CD14-positive monocyte (primary cell): ENCODE measurements at regions of chr4 and their contacts with region 1.

Region 1: DNA sequence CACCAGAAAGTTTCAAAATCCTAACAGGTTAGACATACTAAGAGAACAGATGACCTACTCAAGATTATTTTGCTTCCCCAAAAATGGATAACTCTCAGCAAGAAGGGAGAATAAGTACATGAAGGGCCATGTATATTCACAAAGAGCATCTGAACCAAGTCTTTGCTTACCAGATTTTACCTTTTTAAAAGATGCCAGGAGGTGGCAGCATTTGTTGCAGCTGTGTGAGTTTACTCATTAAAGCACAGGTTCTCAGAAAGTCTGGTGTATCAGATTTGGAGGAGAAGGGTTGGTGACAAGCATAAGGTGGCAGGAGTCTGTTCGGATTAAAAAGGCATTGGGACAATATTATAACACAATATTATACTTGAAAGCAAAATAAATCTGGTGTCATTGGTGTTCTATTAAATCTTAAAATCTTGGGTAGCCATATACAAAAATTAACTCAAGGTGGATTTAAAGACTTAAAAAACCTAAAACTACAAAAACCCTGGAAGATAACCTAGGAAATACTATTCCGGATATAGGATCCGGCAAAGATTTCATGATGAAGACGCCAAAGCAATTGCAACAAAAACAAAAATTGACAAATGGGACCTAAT is 51.3 kb upstream of the NFKB1 start:
- DNase-seq: peak; percentile 30 to 50 (median 49)
- H3K4me3 ChIP-seq: no peak overlapping the region
- H3K4me3 Mint-ChIP-seq: no peak overlapping the region
- H3K27ac ChIP-seq: no peak overlapping the region
- H3K27ac Mint-ChIP-seq: no peak overlapping the region
- H3K4me1 ChIP-seq: peaks cover 7 to 13% of the 10 kb centered on the region in 2 donors
- H3K4me1 Mint-ChIP-seq: peaks cover 8% of the 10 kb centered on the region
- H3K27me3 ChIP-seq: no peaks in the 10 kb centered on the region
- H3K27me3 Mint-ChIP-seq: peaks cover 0 to 2% (median 0%) of the 10 kb centered on the region in 3 donors
- CTCF ChIP-seq: peak; percentile 70

Region 2: DNA sequence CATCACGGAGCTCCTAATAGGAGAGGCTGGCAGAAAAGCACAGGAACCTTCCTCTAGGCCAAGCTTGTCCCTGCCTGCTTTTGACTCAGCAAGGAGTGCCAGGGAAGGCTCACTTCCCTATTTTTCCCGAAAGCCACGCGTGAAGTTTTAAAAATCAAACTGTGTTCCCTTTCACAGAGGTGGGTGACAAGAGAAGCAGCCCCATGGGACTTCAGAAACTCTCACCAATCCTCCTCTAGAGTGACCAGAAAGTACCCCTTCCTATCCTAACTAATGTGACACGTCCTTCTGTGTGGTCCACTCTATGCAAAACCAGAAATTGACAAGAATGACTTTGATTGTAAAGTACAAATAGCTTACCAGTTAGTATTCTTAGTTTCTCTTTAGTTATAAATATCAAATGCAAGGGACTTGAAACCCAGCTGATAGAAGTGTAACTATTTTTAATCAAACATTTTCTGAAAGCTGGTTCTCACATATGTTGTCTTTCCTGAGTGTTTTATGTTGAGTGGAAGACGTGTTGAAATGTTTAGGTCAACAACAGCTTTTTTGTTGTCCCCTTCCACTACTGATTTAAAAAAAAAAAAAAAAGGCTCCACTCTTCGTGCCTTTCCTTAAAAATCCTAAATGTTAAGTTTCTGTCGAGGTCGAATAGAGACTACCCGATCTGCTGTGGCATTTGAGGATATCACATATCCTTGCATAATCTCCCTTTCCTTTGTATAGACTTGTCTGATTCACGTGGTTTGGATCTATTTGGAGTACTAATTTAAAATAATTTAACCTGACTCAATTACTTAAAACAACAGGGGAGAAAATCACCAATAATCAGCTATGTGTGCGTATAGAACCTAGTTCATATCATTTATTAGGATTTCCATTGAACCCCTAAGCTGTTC is 93.4 kb after region 1 on chr4:
- intact Hi-C with region 1: loop called in 1 of 2 experiments (anchors 10 kb)
- DNase-seq: no peak
- H3K4me3 ChIP-seq: no peak overlapping the region
- H3K4me3 Mint-ChIP-seq: no peak overlapping the region
- H3K27ac ChIP-seq: no peak overlapping the region
- H3K27ac Mint-ChIP-seq: peak overlapping the region in 2 of 7 donors; percentile 30 to 63
- H3K4me1 ChIP-seq: no peaks in the 10 kb centered on the region
- H3K4me1 Mint-ChIP-seq: peaks cover 2% of the 10 kb centered on the region
- H3K27me3 ChIP-seq: no peaks in the 10 kb centered on the region
- H3K27me3 Mint-ChIP-seq: no peaks in the 10 kb centered on the region
- CTCF ChIP-seq: no peak

Region 3: GRCh38 chr4:102620697-102621497 is 171.0 kb after region 1 on chr4:
- intact Hi-C with region 1: loop called in 1 of 2 experiments (anchors 5 kb)
- DNase-seq: no peak
- H3K4me3 ChIP-seq: no peak overlapping the region
- H3K4me3 Mint-ChIP-seq: no peak overlapping the region
- H3K27ac ChIP-seq: no peak overlapping the region
- H3K27ac Mint-ChIP-seq: no peak overlapping the region
- H3K4me1 ChIP-seq: peaks cover 8% of the 10 kb centered on the region in 2 donors
- H3K4me1 Mint-ChIP-seq: peaks cover 6% of the 10 kb centered on the region
- H3K27me3 ChIP-seq: no peaks in the 10 kb centered on the region
- H3K27me3 Mint-ChIP-seq: peaks cover 0 to 2% (median 1%) of the 10 kb centered on the region in 3 donors
- CTCF ChIP-seq: peak; percentile 17